Activated CD4-positive, alpha-beta T cell treated with anti-CD3 and anti-CD28 coated beads, Interleukin-2, amount 10 ng/mL, durations not matched to agents 24 days and 14 days (primary cell): ENCODE measurements at regions of chr6 and their contacts with region 1.

Region 1: DNA sequence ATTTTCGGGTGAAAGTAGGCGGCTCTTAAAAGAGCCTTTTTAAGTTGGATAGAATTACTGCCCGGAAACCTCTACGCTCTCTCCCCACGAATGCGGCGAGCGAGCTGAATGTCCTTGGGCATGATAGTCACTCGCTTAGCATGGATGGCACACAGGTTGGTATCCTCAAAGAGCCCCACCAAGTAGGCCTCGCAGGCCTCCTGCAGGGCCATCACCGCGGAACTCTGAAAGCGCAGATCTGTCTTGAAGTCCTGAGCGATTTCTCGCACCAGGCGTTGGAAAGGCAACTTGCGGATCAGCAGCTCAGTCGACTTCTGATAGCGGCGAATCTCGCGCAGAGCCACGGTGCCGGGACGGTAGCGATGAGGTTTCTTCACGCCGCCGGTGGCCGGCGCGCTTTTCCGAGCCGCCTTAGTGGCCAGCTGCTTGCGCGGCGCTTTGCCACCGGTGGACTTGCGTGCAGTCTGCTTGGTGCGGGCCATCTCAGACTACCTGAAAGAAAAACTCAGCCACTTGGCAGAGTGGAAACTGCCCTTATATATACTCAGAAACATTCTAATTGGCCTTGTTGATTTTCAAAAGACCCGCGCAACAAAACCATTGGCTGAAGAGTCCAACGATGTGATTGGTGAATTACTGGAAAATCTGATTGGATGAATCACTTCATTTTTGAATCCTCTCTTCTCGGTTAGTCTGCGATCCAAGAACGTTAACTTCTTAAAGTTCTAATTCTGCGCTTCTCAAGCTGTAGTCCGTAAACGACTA is 93.9 kb upstream of the BTN3A2 start:
- DNase-seq: peak; percentile 95
- H3K4me3 Mint-ChIP-seq: no peak overlapping the region
- H3K27ac Mint-ChIP-seq: no peak overlapping the region
- H3K4me1 Mint-ChIP-seq: peaks cover 28% of the 10 kb centered on the region
- H3K27me3 Mint-ChIP-seq: no peaks in the 10 kb centered on the region

Region 2: DNA sequence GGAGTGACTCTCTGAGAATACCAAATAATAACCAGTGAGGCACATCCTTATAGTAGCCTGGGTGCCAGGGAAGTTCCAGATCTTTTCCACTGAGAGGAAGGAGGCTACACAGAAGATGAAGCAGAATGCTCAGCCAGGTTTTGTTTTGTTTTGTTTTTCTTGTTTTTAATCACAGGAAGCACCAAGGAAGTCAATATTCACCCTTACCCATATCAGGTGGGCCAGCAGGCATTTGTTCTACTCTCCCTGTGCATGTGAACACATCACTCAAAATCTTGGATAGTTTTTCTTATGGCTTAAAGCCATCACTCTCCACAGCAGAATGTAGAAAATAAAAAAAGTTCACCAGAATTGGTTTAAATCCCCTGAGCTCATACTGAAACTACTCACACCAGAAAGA is 449.7 kb before region 1 on chr6:
- intact Hi-C with region 1: no loop called
- DNase-seq: no peak
- H3K4me3 Mint-ChIP-seq: no peak overlapping the region
- H3K27ac Mint-ChIP-seq: no peak overlapping the region
- H3K4me1 Mint-ChIP-seq: peaks cover 4% of the 10 kb centered on the region
- H3K27me3 Mint-ChIP-seq: peaks cover 32% of the 10 kb centered on the region

Region 3: GRCh38 chr6:26054857-26055669 is 216.0 kb before region 1 on chr6:
- intact Hi-C with region 1: loop called (anchors 1 kb)
- DNase-seq: peak; percentile 96
- H3K4me3 Mint-ChIP-seq: peak overlapping the region; percentile 94
- H3K27ac Mint-ChIP-seq: peak overlapping the region; percentile 99
- H3K4me1 Mint-ChIP-seq: peaks cover 30% of the 10 kb centered on the region
- H3K27me3 Mint-ChIP-seq: peaks cover 2% of the 10 kb centered on the region

Region 4: GRCh38 chr6:26175428-26176181 is 95.5 kb before region 1 on chr6:
- intact Hi-C with region 1: loop called (anchors 1 kb)
- DNase-seq: peak; percentile 91
- H3K4me3 Mint-ChIP-seq: peak overlapping the region; percentile 40
- H3K27ac Mint-ChIP-seq: peak overlapping the region; percentile 63
- H3K4me1 Mint-ChIP-seq: peaks cover 45% of the 10 kb centered on the region
- H3K27me3 Mint-ChIP-seq: no peaks in the 10 kb centered on the region

Region 5: DNA sequence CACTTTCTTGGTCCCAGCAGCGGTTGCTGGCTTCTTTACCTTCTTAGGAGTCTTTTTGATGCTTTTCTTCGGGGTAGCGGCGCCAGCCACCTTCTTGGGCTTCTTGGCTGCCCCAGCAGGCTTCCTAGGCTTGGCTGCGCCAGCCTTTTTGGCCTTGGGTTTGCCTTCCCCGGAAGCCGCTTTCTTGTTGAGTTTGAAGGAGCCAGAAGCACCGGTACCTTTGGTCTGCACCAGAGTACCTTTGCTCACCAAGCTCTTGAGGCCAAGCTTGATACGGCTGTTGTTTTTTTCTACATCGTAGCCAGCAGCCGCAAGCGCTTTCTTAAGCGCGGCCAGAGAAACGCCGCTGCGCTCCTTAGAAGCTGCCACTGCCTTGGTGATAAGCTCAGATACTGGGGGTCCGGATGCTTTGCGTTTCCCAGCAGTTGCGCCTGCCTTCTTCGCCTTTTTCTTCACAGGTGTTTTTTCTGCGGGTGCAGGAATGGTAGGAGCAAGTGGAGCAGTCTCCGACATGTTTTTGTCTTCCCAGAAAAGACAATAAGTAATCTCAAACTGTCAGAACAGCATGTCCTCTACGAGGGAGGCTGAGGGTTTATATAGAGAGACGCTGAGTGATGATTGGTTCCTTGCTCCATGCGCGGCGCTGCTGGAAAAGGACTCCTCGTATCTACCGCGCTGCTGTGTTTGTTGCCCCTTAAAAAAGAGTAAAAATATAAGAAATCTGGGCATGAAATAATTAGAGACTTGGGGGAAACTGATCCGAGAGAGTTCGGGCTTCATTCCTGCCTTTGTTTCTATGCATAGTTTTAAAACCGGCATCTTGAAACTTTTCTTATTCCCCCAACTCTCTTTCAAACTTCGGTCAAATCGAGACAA is 36.4 kb before region 1 on chr6:
- intact Hi-C with region 1: loop called (anchors 1 kb)
- DNase-seq: peak; percentile 95
- H3K4me3 Mint-ChIP-seq: peak overlapping the region; percentile 82
- H3K27ac Mint-ChIP-seq: peak overlapping the region; percentile 97
- H3K4me1 Mint-ChIP-seq: peaks cover 39% of the 10 kb centered on the region
- H3K27me3 Mint-ChIP-seq: no peaks in the 10 kb centered on the region

Region 6: GRCh38 chr6:26249957-26250697 is 21.0 kb before region 1 on chr6:
- intact Hi-C with region 1: loop called (anchors 1 kb)
- DNase-seq: peak; percentile 92
- H3K4me3 Mint-ChIP-seq: peak overlapping the region; percentile 95
- H3K27ac Mint-ChIP-seq: peak overlapping the region; percentile 95
- H3K4me1 Mint-ChIP-seq: peaks cover 37% of the 10 kb centered on the region
- H3K27me3 Mint-ChIP-seq: no peaks in the 10 kb centered on the region

Region 7: DNA sequence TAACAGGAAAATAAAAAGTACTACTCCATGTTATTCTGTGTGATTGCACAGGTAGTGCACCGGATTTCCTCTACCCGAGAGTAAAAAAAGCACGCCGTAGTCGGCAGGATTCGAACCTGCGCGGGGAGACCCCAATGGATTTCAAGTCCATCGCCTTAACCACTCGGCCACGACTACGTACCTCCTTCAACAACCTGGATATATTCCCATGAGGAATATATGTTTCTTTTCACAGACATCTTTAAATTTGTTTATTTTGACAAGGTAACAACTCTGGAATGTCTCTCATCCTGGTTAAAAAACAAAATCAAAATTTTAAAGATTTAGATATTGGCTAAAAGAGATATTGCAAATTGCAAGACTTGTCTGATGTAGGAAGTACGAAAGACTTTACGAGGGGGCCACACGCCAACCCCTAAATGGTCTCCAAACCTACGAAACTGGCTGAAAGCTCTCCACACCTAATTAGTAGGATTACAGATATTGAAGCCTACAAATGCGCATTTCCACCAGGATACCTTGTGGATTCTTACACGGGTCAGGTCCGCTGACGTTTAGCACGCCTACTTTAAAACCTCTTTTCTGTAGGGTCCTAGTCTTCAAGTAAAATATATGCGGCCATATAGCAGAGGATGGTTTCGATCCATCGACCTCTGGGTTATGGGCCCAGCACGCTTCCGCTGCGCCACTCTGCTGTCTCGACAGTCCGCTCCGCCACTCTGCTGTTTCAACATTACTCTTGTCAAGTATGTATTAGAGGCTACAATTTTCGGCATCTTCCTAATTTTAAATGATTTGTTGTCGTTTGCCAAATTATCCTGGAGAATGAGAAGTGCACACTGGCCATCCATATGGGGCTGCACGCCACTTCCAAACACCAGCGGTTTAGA is 41.7 kb after region 1 on chr6:
- intact Hi-C with region 1: loop called (anchors 1 kb)
- DNase-seq: peak; percentile 94
- H3K4me3 Mint-ChIP-seq: peak overlapping the region; percentile 91
- H3K27ac Mint-ChIP-seq: peak overlapping the region; percentile 81
- H3K4me1 Mint-ChIP-seq: peaks cover 41% of the 10 kb centered on the region
- H3K27me3 Mint-ChIP-seq: peaks cover 2% of the 10 kb centered on the region

Region 8: GRCh38 chr6:26537846-26538571 is 266.9 kb after region 1 on chr6 and contains the start of gene HMGN4:
- intact Hi-C with region 1: loop called (anchors 5 kb)
- DNase-seq: peak; percentile 95
- H3K4me3 Mint-ChIP-seq: peak within 1 kb of the TSS; percentile 93
- H3K27ac Mint-ChIP-seq: peak within 1 kb of the TSS; percentile 95
- H3K4me1 Mint-ChIP-seq: peaks cover 51% of the 10 kb centered on the region
- H3K27me3 Mint-ChIP-seq: peaks cover 2% of the 10 kb centered on the region
- total RNA-seq, gene HMGN4: 81.6 and 83.4 TPM in 2 replicates